A673 (cell line): ENCODE measurements at regions of chr11 and their contacts with region 1.

Region 1: DNA sequence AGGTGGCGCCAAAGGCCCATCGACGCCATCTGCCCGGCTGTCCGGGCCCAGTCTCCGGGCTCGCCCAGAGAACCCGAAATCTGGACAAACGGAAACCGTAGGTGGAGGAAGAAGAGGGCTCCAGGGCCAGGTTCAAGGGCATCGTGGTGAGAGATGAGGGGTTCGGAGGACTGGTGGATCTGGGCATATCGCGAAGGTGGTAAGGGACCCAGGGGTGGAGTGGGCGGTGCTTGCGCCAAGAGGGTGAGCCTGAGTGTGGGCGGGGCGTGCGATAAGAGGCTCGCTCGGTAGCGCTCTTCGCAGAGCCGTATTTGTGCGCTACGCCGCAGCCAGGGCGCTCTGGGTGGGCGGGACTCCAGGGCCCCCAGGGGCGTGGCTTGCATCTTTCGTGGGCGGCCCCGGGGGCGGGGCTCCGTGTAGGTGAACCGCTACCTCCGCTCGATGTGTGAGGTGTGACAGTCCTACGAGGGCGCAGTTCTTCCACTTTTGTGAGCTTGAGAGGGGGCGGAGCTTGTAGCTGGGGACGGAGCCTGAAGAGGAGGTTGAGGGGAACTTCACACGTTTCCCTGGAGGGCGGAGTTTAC is 4.8 kb downstream of the CD248 start:
- DNase-seq: peak; percentile 98
- H3K4me3 ChIP-seq: peak overlapping the region; percentile 55
- H3K27ac ChIP-seq: peak overlapping the region; percentile 90
- H3K4me1 ChIP-seq: peaks cover 48% of the 10 kb centered on the region
- H3K27me3 ChIP-seq: no peaks in the 10 kb centered on the region
- CTCF ChIP-seq: peak; percentile 98

Region 2: DNA sequence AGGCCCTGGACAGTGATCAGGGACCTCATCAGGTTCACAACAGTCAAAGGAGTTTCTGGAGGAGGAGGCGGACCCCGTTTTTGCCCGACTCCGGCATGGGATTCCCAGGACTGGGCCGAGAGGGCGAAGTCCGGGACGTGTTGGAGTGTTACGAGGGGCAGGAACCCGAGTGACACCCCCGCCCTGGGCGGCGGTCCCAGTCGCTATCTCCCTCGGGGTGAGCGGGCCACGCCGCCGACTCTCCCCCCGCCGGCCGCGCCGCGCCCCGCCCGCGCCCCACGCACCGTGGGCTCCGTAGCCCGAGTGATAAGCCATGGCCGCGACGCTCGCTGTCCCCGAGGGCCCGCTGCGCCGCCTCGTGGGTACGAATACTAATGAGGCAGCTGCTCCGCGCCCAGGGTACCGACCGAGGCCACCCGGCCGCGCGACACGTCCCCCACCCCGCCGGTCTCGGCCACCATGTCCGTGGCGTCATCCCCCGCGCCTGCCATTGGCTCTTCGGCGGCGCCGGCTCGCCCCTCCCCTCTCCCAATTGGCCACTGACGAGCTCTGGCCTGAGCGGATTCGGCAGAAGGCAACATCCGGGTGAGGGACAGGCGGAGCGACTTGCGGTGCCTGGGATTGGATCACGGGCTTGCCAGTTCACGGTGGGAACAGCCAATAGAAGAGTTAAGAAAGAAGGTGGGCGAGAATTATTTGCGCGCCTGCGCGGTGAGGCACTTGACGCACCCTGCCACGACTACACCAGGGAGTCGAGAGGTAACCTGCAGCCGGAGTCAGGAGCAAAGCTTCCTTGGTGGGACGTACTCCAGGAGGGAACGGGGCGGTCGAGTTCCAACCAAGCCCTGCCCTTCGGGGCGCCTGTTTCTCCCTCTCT is 23.1 kb before region 1 on chr11 and contains the start of gene YIF1A:
- CTCF ChIA-PET with region 1: interaction called, 3 read pairs
- POLR2A ChIA-PET with region 1: interaction called, 12 read pairs
- intact Hi-C with region 1: no loop called
- DNase-seq: peak; percentile 100
- H3K4me3 ChIP-seq: peak within 1 kb of the TSS; percentile 77
- H3K27ac ChIP-seq: peak within 1 kb of the TSS; percentile 91
- H3K4me1 ChIP-seq: peaks cover 19% of the 10 kb centered on the region
- H3K27me3 ChIP-seq: no peaks in the 10 kb centered on the region
- CTCF ChIP-seq: peak; percentile 39; the same call in 1 of the 2 replicates
- total RNA-seq, gene YIF1A: 125 and 128 TPM in 2 replicates

Region 3: GRCh38 chr11:66322732-66323427 is 10.8 kb after region 1 on chr11:
- CTCF ChIA-PET with region 1: interaction called, 12 read pairs
- POLR2A ChIA-PET with region 1: interaction called, 3 read pairs
- intact Hi-C with region 1: loop called (anchors 1 kb)
- DNase-seq: no peak
- H3K4me3 ChIP-seq: no peak overlapping the region
- H3K27ac ChIP-seq: peak overlapping the region; percentile 56
- H3K4me1 ChIP-seq: peaks cover 31% of the 10 kb centered on the region
- H3K27me3 ChIP-seq: no peaks in the 10 kb centered on the region
- CTCF ChIP-seq: no peak

Region 4: GRCh38 chr11:66328307-66329144 is 16.5 kb after region 1 on chr11:
- CTCF ChIA-PET with region 1: interaction called, 17 read pairs
- POLR2A ChIA-PET with region 1: interaction called, 3 read pairs
- intact Hi-C with region 1: loop called (anchors 1 kb)
- DNase-seq: peak; percentile 95
- H3K4me3 ChIP-seq: no peak overlapping the region
- H3K27ac ChIP-seq: peak overlapping the region; percentile 59
- H3K4me1 ChIP-seq: peaks cover 24% of the 10 kb centered on the region
- H3K27me3 ChIP-seq: no peaks in the 10 kb centered on the region
- CTCF ChIP-seq: peak; percentile 100

Region 5: GRCh38 chr11:66344550-66345315 is 32.7 kb after region 1 on chr11 and contains the start of gene BRMS1:
- CTCF ChIA-PET with region 1: interaction called, 4 read pairs
- POLR2A ChIA-PET with region 1: no interaction called
- intact Hi-C with region 1: loop called (anchors 2 kb)
- DNase-seq: peak; percentile 98
- H3K4me3 ChIP-seq: peak within 1 kb of the TSS; percentile 78
- H3K27ac ChIP-seq: peak within 1 kb of the TSS; percentile 87
- H3K4me1 ChIP-seq: peaks cover 32% of the 10 kb centered on the region
- H3K27me3 ChIP-seq: no peaks in the 10 kb centered on the region
- CTCF ChIP-seq: 0 out of 2 replicates have a peak, but pooled peaks have one; percentile 18
- total RNA-seq, gene BRMS1: 76.8 and 93.5 TPM in 2 replicates

Region 6: DNA sequence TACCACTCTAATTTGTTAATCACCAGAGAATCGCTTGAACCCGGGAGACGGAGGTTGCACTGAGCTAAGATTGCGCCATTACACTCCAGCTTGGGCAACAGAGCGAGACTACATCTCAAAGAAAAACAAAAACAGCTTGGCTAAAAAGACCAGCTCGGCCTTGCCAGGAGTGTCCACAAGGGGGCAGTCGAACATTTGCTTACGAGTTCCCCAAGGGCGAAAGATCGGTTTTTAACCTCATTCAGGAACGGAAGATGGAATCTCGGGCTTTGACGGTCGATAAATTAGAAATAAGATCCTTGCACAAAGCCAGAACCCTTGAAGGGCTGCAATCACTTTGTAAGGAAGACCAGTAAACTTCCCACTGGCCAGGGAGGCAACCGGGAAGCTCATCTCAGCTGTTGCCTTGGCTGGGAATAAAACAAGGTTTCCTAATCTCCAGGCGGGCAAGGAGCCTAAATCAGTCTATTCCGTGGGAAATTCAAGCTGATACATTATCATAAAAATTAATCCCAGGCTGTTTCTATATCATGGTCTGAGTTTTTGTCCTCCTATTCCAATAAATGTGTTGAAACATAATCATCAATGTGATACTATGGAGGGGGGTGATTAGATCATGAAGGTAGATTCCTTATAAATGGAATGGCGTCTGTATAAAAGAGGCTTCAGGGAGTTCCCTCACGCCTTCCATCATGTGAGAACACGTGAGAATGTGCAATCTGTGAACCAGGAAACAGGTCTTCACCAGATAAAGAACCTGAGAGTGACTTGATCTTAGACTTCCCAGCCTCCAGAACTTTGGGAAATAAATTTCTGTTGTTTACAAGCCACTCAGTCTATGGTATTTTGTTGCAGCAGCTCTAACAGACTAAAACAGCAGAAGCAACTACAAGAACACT is 74.4 kb after region 1 on chr11:
- CTCF ChIA-PET with region 1: interaction called, 24 read pairs
- POLR2A ChIA-PET with region 1: no interaction called
- intact Hi-C with region 1: loop called (anchors 5 kb)
- DNase-seq: peak; percentile 93
- H3K4me3 ChIP-seq: peak overlapping the region; percentile 26
- H3K27ac ChIP-seq: no peak overlapping the region
- H3K4me1 ChIP-seq: peaks cover 2% of the 10 kb centered on the region
- H3K27me3 ChIP-seq: no peaks in the 10 kb centered on the region
- CTCF ChIP-seq: peak; percentile 99